Endothelial cell of umbilical vein (primary cell): ENCODE measurements at regions of chr14 and their contacts with region 1.

Region 1: GRCh38 chr14:28515571-28515970 is 251.0 kb upstream of the FOXG1 start:
- DNase-seq: peak; percentile 23
- H3K4me3 ChIP-seq: no peak overlapping the region
- H3K27ac ChIP-seq: peak overlapping the region; percentile 29
- H3K4me1 ChIP-seq: no peaks in the 10 kb centered on the region
- H3K27me3 ChIP-seq: no peaks in the 10 kb centered on the region
- CTCF ChIP-seq: no peak
- POLR2A ChIP-seq: no peak

Region 2: GRCh38 chr14:28284546-28285300 is 230.8 kb before region 1 on chr14:
- CTCF ChIA-PET with region 1: no interaction called
- POLR2A ChIA-PET with region 1: no interaction called
- dilution Hi-C with region 1: no loop called
- intact Hi-C with region 1: no loop called
- DNase-seq: no peak
- H3K4me3 ChIP-seq: no peak overlapping the region
- H3K27ac ChIP-seq: no peak overlapping the region
- H3K4me1 ChIP-seq: no peaks in the 10 kb centered on the region
- H3K27me3 ChIP-seq: no peaks in the 10 kb centered on the region
- CTCF ChIP-seq: no peak
- POLR2A ChIP-seq: no peak

Region 3: GRCh38 chr14:28308734-28309133 is 206.8 kb before region 1 on chr14:
- CTCF ChIA-PET with region 1: no interaction called
- POLR2A ChIA-PET with region 1: no interaction called
- dilution Hi-C with region 1: no loop called
- intact Hi-C with region 1: loop called (anchors 2 kb)
- DNase-seq: peak; percentile 60
- H3K4me3 ChIP-seq: no peak overlapping the region
- H3K27ac ChIP-seq: peak overlapping the region; percentile 62
- H3K4me1 ChIP-seq: peaks cover 23% of the 10 kb centered on the region
- H3K27me3 ChIP-seq: no peaks in the 10 kb centered on the region
- CTCF ChIP-seq: no peak
- POLR2A ChIP-seq: no peak